ENCODE measurements at regions of chr5 and their contacts with region 1.

Region 1: GRCh38 chr5:180507661-180508060 is 13.5 kb downstream of the CNOT6 start:
- DNase-seq: no peak
- CTCF ChIP-seq: no peak

Region 2: GRCh38 chr5:179559284-179560252 is 948.1 kb before region 1 on chr5:
- CTCF ChIA-PET with region 1: no interaction called
- POLR2A ChIA-PET with region 1: interaction called, 11 read pairs
- DNase-seq: peak; percentile 96
- CTCF ChIP-seq: no peak

Region 3: DNA sequence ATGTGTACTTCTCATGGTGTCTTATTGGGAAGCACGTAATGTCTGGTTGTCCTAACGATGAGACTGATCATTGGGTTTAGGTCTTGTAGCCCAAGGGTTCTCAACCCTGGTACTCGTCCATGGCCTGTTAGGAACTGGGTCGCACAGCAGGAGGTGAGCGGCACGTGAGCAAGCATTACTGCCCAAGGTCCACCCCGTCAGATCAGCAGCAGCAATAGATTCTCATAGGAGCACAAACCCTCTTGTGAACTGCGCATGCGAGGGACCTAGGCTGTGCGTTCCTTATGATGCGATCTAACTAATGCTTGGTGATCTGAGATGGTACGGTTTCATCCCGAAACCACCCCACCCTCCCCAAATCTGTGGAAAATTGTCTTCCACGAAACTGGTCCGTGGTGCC is 20.0 kb after region 1 on chr5:
- CTCF ChIA-PET with region 1: no interaction called
- POLR2A ChIA-PET with region 1: no interaction called
- DNase-seq: no peak
- CTCF ChIP-seq: no peak